ENCODE measurements at regions of chr6 and their contacts with region 1.

Region 1: DNA sequence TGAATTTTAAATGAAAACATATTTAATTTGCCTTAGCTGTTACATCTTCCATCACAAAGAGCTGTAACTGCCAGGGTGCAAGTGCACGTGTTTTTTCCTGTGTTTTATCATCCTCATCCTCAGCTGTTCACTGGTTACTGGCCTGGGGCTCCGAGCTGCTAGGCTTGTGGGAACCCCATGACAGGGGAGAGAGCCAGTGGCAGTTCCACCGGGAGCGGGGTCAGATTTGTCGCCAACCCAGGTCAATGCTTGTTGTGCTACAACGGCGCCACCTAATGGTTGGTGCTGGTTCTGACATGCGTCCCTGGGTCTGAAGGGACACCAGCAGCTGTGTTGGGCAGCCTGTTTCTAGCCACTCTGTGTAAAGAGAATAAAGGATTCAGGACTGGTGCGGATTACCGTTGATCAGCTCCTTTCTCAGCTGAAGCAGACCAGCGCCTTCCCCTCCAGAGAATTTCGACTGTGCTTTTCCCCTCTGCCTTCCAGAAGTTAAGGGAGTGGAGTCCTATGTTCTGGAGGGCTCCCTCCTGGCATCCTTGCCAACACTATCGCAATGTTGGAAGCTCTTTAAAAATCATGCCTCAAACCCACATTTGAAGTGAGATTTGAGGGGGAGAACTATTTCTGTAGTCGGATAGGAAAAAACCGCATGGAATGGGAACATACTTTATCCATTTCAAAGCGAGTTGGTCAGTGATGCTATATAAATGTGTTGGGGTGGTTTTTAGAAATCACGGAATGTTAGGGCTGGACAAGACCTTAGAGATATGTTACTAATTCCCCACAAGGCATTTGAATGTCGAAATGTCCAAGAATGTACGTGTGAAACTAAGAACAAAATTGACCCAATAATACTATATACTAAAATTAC is 32.1 kb downstream of the SUMO4 start:
- DNase-seq: peak; percentile 79
- H3K4me3 Mint-ChIP-seq: peak overlapping the region; percentile 48
- H3K27ac Mint-ChIP-seq: peak overlapping the region; percentile 79
- H3K4me1 Mint-ChIP-seq: peaks cover 23% of the 10 kb centered on the region
- H3K27me3 Mint-ChIP-seq: no peaks in the 10 kb centered on the region

Region 2: GRCh38 chr6:148578245-148578732 is 853.9 kb before region 1 on chr6:
- intact Hi-C with region 1: loop called (anchors 5 kb)
- DNase-seq: no peak
- H3K4me3 Mint-ChIP-seq: no peak overlapping the region
- H3K27ac Mint-ChIP-seq: no peak overlapping the region
- H3K4me1 Mint-ChIP-seq: no peaks in the 10 kb centered on the region
- H3K27me3 Mint-ChIP-seq: peaks cover 22% of the 10 kb centered on the region

Region 3: DNA sequence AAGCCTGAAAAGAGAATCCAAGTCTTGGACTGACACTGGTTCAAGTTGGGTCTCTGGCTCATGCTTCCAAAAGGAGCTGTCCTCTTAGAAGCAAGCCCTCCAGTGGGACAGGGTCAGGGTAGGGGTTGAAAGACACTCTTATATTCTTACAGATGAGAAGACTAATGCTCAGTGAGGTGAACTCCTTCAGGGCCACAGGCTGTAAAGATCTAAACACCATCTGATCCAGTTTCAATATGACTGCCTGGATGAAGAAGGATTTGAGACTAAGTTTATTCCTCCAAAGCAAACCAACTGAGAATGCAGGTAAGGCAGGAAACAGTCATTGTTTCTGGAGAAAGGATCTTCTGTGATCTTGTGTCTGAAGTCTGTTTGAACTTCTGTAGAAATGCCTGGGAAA is 213.7 kb before region 1 on chr6:
- intact Hi-C with region 1: loop called (anchors 2 kb)
- DNase-seq: no peak
- H3K4me3 Mint-ChIP-seq: peak overlapping the region; percentile 45
- H3K27ac Mint-ChIP-seq: peak overlapping the region; percentile 77
- H3K4me1 Mint-ChIP-seq: peaks cover 56% of the 10 kb centered on the region
- H3K27me3 Mint-ChIP-seq: no peaks in the 10 kb centered on the region